ENCODE measurements at regions of chr9 and their contacts with region 1.

Region 1: DNA sequence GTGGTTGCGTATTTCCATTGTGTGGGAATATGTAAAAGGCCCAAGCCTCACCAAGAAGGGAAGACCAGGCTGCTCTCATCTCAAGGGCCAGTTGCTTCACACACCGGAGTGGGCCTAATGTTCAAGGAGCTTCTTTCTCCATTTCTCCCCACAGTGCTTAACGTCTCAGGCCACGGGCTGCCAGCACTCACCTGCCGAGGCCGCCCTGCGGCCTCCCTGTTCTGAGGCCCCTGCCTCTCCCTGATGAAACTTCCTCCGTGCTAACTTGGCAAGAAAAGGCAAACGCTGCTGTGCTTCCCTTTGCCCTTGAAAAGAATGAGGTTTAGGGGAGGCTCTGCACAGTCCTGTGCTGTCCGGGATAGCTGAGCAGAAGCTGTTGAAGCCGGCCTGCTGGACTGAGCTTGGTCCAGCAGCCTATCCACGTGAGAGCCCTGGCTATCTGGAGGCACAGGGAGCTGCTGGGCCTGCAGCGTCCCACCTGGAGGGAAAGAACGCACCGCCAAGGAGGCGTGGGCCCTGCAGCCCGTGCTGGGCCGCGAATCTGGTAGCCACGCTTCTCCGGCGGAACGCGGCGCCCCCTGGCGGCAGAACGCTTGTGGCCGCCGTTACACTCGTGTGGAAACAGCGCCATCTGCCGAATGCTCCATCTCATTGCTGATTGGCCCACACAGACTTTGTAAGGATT is 73.5 kb upstream of the PRSS3 start:
- DNase-seq: peak; percentile 87 to 93 (median 90)
- ATAC-seq: peak; percentile 90
- H3K4me3 ChIP-seq: no peak overlapping the region
- H3K27ac ChIP-seq: no peak overlapping the region
- H3K4me1 ChIP-seq: peaks cover 5% of the 10 kb centered on the region
- H3K27me3 ChIP-seq: no peaks in the 10 kb centered on the region
- CTCF ChIP-seq: peak; percentile 98 to 100 (median 100)
- POLR2A ChIP-seq: no peak

Region 2: DNA sequence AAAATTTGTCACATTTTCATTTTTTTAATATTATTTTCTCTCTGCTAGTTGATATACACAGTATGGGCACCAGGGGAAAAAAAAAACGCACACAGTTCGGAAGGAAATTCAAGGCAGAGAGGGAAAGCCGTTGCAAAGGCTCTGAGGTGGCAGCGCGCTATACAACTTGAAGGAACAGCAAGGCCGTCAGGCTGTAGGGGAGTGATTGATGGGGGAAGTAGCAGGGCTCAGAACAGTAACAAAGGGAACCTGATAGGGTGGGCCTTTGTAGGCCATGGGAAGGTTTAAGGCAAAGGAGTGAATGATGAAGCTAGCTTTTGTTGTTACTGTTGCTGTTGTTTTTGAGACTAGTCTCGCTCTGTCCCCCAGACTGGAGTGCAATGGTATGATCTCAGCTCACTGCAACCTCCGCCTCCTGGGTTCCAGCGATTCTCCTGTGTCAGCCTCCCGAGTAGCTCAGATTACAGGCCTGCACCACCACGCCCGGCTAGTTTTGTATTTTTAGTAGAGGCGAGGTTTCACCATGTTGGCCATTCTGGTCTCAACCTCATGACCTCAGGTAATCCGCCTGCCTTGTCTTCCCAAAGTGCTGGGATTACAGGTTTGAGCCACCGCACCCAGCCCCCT is 346.5 kb before region 1 on chr9:
- intact Hi-C with region 1: no loop called
- DNase-seq: peak in 1 of 4 donors; percentile 7
- ATAC-seq: peak; percentile 24
- H3K4me3 ChIP-seq: no peak overlapping the region
- H3K27ac ChIP-seq: peak overlapping the region in 1 of 4 donors; percentile 26
- H3K4me1 ChIP-seq: peaks cover 6% of the 10 kb centered on the region
- H3K27me3 ChIP-seq: no peaks in the 10 kb centered on the region
- CTCF ChIP-seq: no peak
- POLR2A ChIP-seq: no peak

Region 3: GRCh38 chr9:33623658-33624586 is 97.9 kb before region 1 on chr9:
- intact Hi-C with region 1: loop called (anchors 5 kb)
- DNase-seq: peak; percentile 65 to 74 (median 73)
- ATAC-seq: peak; percentile 87
- H3K4me3 ChIP-seq: no peak overlapping the region
- H3K27ac ChIP-seq: no peak overlapping the region
- H3K4me1 ChIP-seq: peaks cover 5% of the 10 kb centered on the region
- H3K27me3 ChIP-seq: no peaks in the 10 kb centered on the region
- CTCF ChIP-seq: peak; percentile 71 to 90 (median 85)
- POLR2A ChIP-seq: no peak

Measured in body of pancreas (tissue), 4 donors.